CD4-positive, alpha-beta memory T cell (primary cell): ENCODE measurements at regions of chr2 and their contacts with region 1.

Region 1: DNA sequence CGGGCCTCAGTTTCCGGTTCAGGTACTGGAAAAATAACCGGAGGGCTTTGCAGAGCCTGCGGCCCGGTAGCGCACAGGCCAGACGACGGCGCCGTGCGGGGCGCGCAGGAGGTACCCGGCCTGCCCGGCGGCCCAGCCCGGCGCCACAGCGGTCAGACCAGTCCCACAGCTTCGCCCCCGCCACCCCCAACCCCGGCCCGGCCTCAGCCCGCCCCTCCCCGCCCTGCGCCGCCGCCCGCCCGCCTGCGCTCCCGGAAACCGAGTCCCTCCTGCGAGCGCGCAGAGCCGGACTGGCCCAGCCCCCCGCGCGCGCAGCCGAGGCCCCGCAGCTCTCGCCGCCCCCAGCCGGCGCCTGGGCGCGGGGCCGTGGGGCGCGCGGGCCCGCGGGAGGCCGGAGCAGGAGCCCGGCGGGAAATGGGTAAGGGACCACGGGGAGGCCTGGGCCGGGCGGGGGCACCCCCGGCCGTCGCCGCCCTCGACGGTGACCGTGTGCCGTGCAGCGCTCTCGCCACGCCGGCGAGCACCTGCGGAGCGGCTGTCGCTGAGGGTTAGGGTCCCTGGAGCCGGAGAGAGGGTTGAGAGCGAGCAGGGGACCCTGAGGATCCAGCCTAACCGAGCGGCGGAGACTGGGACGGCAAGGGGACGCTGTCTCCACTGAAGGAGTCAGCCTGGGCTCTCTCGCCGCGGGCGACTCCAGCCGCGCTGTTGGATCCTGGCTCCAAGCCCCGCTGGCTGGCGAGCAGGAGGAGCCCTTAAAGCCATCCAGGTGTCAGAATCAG is 16.5 kb upstream of the PSD4 start:
- DNase-seq: peak in 4 of 5 donors; percentile 39 to 57 (median 50)
- H3K4me3 ChIP-seq: peak overlapping the region; percentile 57 to 74
- H3K4me3 Mint-ChIP-seq: peak overlapping the region; percentile 85 to 95 (median 88)
- H3K27ac ChIP-seq: peak overlapping the region; percentile 55
- H3K27ac Mint-ChIP-seq: peak overlapping the region; percentile 57 to 88 (median 74)
- H3K4me1 ChIP-seq: peaks cover 27% of the 10 kb centered on the region
- H3K4me1 Mint-ChIP-seq: peaks cover 13 to 28% (median 23%) of the 10 kb centered on the region in 4 donors
- H3K27me3 ChIP-seq: no peaks in the 10 kb centered on the region
- H3K27me3 Mint-ChIP-seq: no peaks in the 10 kb centered on the region

Region 2: DNA sequence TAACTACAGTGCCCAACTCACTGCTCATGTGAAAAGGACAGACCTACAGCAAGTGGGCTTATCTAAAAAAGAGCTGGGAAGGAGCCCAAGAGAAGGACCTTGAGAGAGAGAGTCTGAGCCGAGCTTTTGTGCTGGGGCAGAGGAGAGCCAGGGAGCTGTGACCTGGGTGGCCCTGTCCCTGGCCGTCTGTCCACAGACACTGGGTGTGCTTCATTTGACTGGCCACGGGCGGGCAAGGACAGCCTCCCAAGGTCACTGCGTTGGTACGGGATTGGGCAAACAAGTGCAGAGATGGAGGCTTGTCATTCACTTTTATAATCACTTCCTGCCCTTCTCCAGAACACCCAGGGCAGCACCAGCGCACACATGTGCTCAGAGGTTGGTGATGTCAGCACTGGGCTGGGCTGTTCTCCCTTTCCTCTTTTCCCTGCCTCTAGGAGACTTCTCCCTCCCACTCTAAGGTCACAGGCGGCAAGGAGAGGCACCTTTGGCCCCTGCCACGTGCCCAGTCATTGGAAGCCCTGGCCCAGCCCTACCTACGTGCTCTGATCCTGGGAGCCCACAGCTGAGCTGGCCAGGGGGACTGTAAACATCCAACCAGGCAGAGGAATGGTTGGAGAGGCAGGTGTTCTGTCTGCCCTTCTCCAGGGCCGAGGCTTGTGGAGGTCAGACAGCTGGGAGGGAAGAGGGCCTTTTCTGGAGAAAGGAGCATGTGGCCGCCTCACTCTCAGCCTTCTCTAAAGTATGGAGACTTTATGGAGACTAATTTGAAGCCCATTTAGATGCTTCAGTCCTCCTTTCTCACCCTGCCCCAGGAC is 10.0 kb after region 1 on chr2:
- CTCF ChIA-PET with region 1: interaction called, 25 read pairs
- POLR2A ChIA-PET with region 1: interaction called, 209 read pairs
- intact Hi-C with region 1: loop called (anchors 1 kb)
- DNase-seq: peak in 4 of 5 donors; percentile 29 to 46 (median 34)
- H3K4me3 ChIP-seq: peak overlapping the region in 1 of 2 donors; percentile 7
- H3K4me3 Mint-ChIP-seq: peak overlapping the region; percentile 57 to 89 (median 80)
- H3K27ac ChIP-seq: peak overlapping the region; percentile 56
- H3K27ac Mint-ChIP-seq: peak overlapping the region; percentile 87 to 98 (median 97)
- H3K4me1 ChIP-seq: peaks cover 65% of the 10 kb centered on the region
- H3K4me1 Mint-ChIP-seq: peaks cover 50 to 75% (median 65%) of the 10 kb centered on the region in 4 donors
- H3K27me3 ChIP-seq: no peaks in the 10 kb centered on the region
- H3K27me3 Mint-ChIP-seq: no peaks in the 10 kb centered on the region

Region 3: GRCh38 chr2:113173542-113174395 is 16.5 kb after region 1 on chr2 and contains the start of gene PSD4:
- CTCF ChIA-PET with region 1: interaction called, 34 read pairs
- POLR2A ChIA-PET with region 1: interaction called, 209 read pairs
- intact Hi-C with region 1: loop called (anchors 1 kb)
- DNase-seq: peak; percentile 89 to 94 (median 91)
- H3K4me3 ChIP-seq: peak within 1 kb of the TSS; percentile 81 to 82
- H3K4me3 Mint-ChIP-seq: peak within 1 kb of the TSS; percentile 88 to 99 (median 94)
- H3K27ac ChIP-seq: peak within 1 kb of the TSS; percentile 85
- H3K27ac Mint-ChIP-seq: peak within 1 kb of the TSS; percentile 92 to 100 (median 96)
- H3K4me1 ChIP-seq: peaks cover 80% of the 10 kb centered on the region
- H3K4me1 Mint-ChIP-seq: peaks cover 56 to 89% (median 71%) of the 10 kb centered on the region in 4 donors
- H3K27me3 ChIP-seq: no peaks in the 10 kb centered on the region
- H3K27me3 Mint-ChIP-seq: peaks cover 2% of the 10 kb centered on the region in 2 donors
- total RNA-seq, gene PSD4: 100.0 to 101 TPM

Region 4: DNA sequence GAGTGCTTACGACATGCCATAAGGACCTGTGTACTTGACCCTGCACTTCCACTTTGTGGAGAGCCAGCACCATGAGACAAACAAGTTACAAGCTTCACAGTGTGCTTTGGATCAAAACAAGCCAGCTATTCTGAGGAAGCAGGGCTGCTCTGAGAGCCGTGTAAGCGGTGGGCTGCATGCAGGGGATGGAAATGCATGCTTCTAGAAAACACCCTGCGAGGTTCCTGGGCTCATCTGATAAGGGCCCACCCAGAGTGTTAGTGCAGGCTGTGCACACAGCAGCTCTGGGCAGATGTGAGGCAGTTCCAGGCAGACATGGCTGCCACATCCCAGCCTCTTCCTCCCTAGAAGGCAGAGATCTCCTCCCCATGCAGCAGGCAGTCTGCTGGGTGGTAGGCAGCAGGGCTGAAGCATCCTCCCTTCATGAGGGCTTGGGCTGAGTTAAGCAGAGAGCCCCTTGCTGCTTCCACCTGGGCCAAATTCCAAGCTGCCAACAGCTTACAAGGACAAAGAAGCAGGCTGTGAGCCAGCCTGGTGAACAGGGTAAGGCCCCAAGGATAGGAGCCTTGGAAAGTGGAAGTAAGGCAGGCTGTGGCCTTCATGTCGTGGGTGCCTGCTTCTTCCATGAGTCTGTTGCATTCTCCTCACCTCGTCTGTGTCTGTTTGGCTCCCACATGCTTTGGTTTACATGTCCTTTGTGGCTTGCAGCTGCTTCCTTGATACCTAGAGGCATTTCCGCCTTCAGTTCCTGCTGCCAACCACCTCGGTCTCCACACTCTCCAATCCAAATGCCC is 24.1 kb after region 1 on chr2:
- CTCF ChIA-PET with region 1: interaction called, 34 read pairs
- POLR2A ChIA-PET with region 1: interaction called, 209 read pairs
- intact Hi-C with region 1: no loop called
- DNase-seq: peak in 3 of 5 donors; percentile 27 to 36 (median 29)
- H3K4me3 ChIP-seq: peak overlapping the region in 1 of 2 donors; percentile 7
- H3K4me3 Mint-ChIP-seq: peak overlapping the region; percentile 61 to 93 (median 70)
- H3K27ac ChIP-seq: peak overlapping the region; percentile 27
- H3K27ac Mint-ChIP-seq: peak overlapping the region; percentile 86 to 94 (median 91)
- H3K4me1 ChIP-seq: peaks cover 100% of the 10 kb centered on the region
- H3K4me1 Mint-ChIP-seq: peaks cover 69 to 99% (median 90%) of the 10 kb centered on the region in 4 donors
- H3K27me3 ChIP-seq: no peaks in the 10 kb centered on the region
- H3K27me3 Mint-ChIP-seq: no peaks in the 10 kb centered on the region

Region 5: DNA sequence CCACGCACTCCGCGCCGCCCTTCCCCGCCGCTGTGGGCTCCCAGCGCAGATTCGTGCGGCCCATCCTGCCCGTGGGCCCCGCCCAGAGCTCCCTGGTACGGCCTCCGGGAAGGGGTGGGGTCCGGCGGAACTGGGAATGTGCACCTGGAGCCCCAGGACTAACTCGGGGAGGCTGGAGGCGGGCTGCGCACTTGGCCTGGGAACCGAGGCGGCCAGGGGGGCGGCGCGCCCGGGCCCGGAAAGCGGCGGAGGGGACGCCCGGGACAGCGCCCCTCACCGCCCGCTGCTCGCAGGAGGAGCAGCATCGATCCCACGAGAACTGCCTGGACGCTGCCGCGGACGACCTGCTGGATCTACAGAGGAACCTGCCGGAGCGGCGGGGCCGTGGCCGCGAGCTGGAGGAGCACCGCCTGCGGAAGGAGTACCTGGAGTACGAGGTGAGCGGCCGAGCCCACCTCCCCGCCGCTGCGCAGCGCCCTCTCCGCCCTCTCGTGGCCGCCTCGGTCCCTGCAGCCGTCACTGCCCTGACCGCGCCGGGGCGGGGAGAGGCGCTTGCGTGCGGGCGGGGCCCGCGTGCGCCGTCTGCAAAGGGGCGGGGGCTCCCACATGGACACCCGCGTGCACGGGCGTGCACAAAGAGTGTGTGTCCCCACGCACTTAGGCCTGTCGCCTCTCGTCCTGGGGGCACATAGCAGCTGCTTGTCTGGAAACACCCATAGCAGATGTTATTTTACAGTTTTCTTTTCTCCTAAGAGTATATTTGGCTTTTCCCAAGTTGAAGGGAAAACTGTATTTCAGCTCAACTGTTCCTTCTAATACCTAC is 41.7 kb after region 1 on chr2:
- CTCF ChIA-PET with region 1: interaction called, 12 read pairs
- POLR2A ChIA-PET with region 1: interaction called, 10 read pairs
- intact Hi-C with region 1: loop called (anchors 1 kb)
- DNase-seq: peak; percentile 42 to 70 (median 58)
- H3K4me3 ChIP-seq: no peak overlapping the region
- H3K4me3 Mint-ChIP-seq: no peak overlapping the region
- H3K27ac ChIP-seq: no peak overlapping the region
- H3K27ac Mint-ChIP-seq: peak overlapping the region in 2 of 7 donors; percentile 10 to 60
- H3K4me1 ChIP-seq: peaks cover 10% of the 10 kb centered on the region
- H3K4me1 Mint-ChIP-seq: peaks cover 9 to 42% (median 12%) of the 10 kb centered on the region in 4 donors
- H3K27me3 ChIP-seq: no peaks in the 10 kb centered on the region
- H3K27me3 Mint-ChIP-seq: no peaks in the 10 kb centered on the region

Region 6: DNA sequence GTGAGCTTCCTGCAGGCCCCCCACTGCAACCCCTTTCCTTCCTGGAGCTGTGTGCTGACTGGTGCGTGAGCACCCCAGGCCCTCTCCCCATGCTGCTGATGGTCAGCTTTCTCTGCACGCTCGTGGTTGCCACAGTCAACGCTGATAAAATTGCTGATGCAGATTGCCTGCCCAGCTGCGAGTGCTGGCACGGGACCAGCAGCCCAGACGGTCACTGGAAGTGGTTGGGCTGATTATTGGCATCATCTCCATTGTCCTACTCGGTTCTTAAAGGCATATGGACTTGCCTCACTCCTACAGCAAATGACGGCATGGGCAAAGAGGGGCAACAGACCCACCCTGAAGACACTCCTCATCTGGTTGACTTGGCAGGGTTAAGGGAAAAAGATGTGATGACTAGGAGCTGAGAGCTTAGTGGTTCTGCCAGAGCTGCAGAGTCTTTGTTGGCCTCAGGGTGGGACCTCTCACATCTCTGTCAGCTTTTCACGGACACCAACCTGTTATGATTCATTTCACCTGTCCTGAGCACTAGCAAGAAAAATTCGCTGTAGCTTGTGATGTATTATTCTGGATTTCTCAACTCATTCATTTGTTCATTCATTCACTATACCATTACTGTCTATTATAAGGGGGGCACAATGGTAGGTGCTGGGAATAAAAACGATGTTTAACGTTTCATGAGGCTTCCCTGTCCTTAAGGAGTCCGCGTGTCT is 83.0 kb after region 1 on chr2:
- CTCF ChIA-PET with region 1: no interaction called
- POLR2A ChIA-PET with region 1: no interaction called
- intact Hi-C with region 1: no loop called
- DNase-seq: no peak
- H3K4me3 ChIP-seq: no peak overlapping the region
- H3K4me3 Mint-ChIP-seq: no peak overlapping the region
- H3K27ac ChIP-seq: no peak overlapping the region
- H3K27ac Mint-ChIP-seq: peak overlapping the region in 2 of 7 donors; percentile 14 to 47
- H3K4me1 ChIP-seq: peaks cover 6% of the 10 kb centered on the region
- H3K4me1 Mint-ChIP-seq: peaks cover 0 to 48% (median 0%) of the 10 kb centered on the region in 4 donors
- H3K27me3 ChIP-seq: no peaks in the 10 kb centered on the region
- H3K27me3 Mint-ChIP-seq: no peaks in the 10 kb centered on the region

Region 7: GRCh38 chr2:113755835-113756354 is 598.6 kb after region 1 on chr2:
- CTCF ChIA-PET with region 1: no interaction called
- POLR2A ChIA-PET with region 1: no interaction called
- intact Hi-C with region 1: no loop called
- DNase-seq: peak in 1 of 5 donors; percentile 50
- H3K4me3 ChIP-seq: peak overlapping the region; percentile 95 to 100
- H3K4me3 Mint-ChIP-seq: peak overlapping the region; percentile 92 to 99 (median 96)
- H3K27ac ChIP-seq: peak overlapping the region; percentile 80
- H3K27ac Mint-ChIP-seq: peak overlapping the region; percentile 95 to 98 (median 97)
- H3K4me1 ChIP-seq: peaks cover 25% of the 10 kb centered on the region
- H3K4me1 Mint-ChIP-seq: peaks cover 17 to 36% (median 25%) of the 10 kb centered on the region in 4 donors
- H3K27me3 ChIP-seq: no peaks in the 10 kb centered on the region
- H3K27me3 Mint-ChIP-seq: no peaks in the 10 kb centered on the region